ENCODE measurements at regions of chr7 and their contacts with region 1.

Region 1: DNA sequence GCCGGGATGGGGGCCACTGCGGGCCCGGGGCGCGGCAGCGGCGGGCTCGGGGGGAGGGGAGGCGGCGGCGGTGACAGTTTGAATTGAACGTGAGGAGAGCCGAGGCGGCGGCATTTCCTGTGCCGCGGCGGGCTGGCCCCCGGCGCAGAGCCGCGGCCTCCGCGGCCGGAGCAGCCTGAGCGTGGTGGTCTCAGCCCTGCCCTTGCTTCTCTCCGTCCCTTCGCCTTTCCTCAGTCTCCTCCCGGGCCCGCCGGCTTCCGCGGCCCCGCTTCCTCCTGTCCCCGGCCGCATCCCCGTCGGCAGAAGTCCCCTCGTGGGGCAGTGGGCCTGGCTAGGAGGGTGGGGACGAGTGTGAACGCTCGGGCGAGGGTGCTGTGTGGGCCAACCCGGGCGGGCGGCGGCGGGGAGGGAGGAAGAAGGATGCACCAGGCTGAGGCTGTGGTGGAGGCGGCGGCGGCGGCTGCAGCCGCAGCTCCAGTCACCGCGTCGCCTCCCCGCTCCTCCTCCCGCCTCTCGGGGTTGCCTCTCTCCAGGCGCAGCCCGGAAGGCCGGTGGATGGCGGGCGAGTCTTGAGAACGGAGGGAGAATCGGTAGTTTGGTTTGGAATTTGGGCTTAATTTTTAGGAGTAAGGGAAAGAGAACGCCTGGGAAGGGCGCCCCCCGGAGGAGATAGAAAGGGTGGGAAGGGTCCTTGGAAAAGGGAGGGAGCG is 690 bp downstream of the SEPTIN7 start:
- DNase-seq: peak; percentile 63 to 90 (median 79)
- ATAC-seq: peak; percentile 27
- H3K4me3 ChIP-seq: peak overlapping the region; percentile 58 to 84
- H3K4me3 Mint-ChIP-seq: peak overlapping the region; percentile 91
- H3K27ac ChIP-seq: peak overlapping the region; percentile 98
- H3K27ac Mint-ChIP-seq: peak overlapping the region; percentile 98
- H3K4me1 ChIP-seq: peaks cover 49% of the 10 kb centered on the region
- H3K4me1 Mint-ChIP-seq: peaks cover 48% of the 10 kb centered on the region
- H3K27me3 ChIP-seq: no peaks in the 10 kb centered on the region
- H3K27me3 Mint-ChIP-seq: no peaks in the 10 kb centered on the region
- CTCF ChIP-seq: peak; percentile 26

Region 2: GRCh38 chr7:35694781-35695472 is 106.6 kb before region 1 on chr7 and contains the start of gene HERPUD2:
- CTCF ChIA-PET with region 1: interaction called, 9 read pairs
- POLR2A ChIA-PET with region 1: interaction called, 80 read pairs
- intact Hi-C with region 1: loop called (anchors 1 kb)
- DNase-seq: peak; percentile 85 to 96 (median 93)
- ATAC-seq: peak; percentile 80
- H3K4me3 ChIP-seq: peak within 1 kb of the TSS; percentile 93 to 100
- H3K4me3 Mint-ChIP-seq: peak within 1 kb of the TSS; percentile 87
- H3K27ac ChIP-seq: peak within 1 kb of the TSS; percentile 97 to 100
- H3K27ac Mint-ChIP-seq: peak within 1 kb of the TSS; percentile 100
- H3K4me1 ChIP-seq: peaks cover 33% of the 10 kb centered on the region
- H3K4me1 Mint-ChIP-seq: peaks cover 59% of the 10 kb centered on the region
- H3K27me3 ChIP-seq: no peaks in the 10 kb centered on the region
- H3K27me3 Mint-ChIP-seq: no peaks in the 10 kb centered on the region
- CTCF ChIP-seq: no peak
- total RNA-seq, gene HERPUD2: 123 to 134 TPM

Region 3: GRCh38 chr7:35714862-35715261 is 86.7 kb before region 1 on chr7:
- CTCF ChIA-PET with region 1: interaction called, 8 read pairs
- POLR2A ChIA-PET with region 1: interaction called, 21 read pairs
- intact Hi-C with region 1: no loop called
- DNase-seq: peak in 1 of 9 experiments; percentile 35
- ATAC-seq: no peak
- H3K4me3 ChIP-seq: no peak overlapping the region
- H3K4me3 Mint-ChIP-seq: no peak overlapping the region
- H3K27ac ChIP-seq: no peak overlapping the region
- H3K27ac Mint-ChIP-seq: peak overlapping the region; percentile 2
- H3K4me1 ChIP-seq: peaks cover 8% of the 10 kb centered on the region
- H3K4me1 Mint-ChIP-seq: peaks cover 8% of the 10 kb centered on the region
- H3K27me3 ChIP-seq: no peaks in the 10 kb centered on the region
- H3K27me3 Mint-ChIP-seq: no peaks in the 10 kb centered on the region
- CTCF ChIP-seq: no peak

Region 4: GRCh38 chr7:35839860-35840854 is 38.6 kb after region 1 on chr7:
- CTCF ChIA-PET with region 1: no interaction called
- POLR2A ChIA-PET with region 1: interaction called, 3 read pairs
- intact Hi-C with region 1: loop called (anchors 5 kb)
- DNase-seq: no peak
- ATAC-seq: no peak
- H3K4me3 ChIP-seq: no peak overlapping the region
- H3K4me3 Mint-ChIP-seq: no peak overlapping the region
- H3K27ac ChIP-seq: no peak overlapping the region
- H3K27ac Mint-ChIP-seq: no peak overlapping the region
- H3K4me1 ChIP-seq: no peaks in the 10 kb centered on the region
- H3K4me1 Mint-ChIP-seq: peaks cover 58% of the 10 kb centered on the region
- H3K27me3 ChIP-seq: no peaks in the 10 kb centered on the region
- H3K27me3 Mint-ChIP-seq: no peaks in the 10 kb centered on the region
- CTCF ChIP-seq: no peak

Region 5: DNA sequence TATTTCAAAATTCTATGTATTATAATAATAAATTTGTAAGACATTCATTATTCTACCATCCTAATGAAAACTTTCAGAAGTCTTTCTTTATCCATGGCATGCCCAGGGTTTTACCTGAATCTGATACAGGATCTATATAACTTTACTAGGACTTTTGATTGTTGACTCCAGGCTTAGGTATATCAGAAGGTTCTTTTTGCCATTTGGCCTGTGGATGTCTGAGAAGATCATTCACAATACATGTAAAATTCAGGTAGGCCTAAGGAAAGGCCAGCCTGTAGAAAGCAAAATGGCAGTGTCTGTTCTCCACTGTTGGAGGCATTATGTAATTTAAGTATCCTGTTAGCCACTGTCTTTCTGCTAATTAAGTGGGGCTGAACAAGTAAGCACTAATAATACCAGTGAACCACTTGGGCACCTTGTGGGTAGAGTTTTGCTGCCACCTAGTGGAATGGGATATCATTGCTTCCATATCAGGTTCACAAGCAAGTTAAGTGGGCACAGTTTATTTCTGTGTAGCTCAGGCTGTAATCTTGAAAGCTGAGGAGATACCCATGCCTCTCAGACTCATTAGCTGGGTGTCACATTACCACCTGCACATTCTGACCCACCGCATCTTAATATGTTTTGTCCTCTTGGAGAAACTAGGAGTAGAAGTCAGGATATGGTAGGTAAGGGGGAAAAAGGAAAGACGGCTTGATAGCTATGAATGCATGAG is 104.8 kb after region 1 on chr7:
- CTCF ChIA-PET with region 1: interaction called, 3 read pairs
- POLR2A ChIA-PET with region 1: no interaction called
- intact Hi-C with region 1: loop called in 1 of 2 experiments (anchors 5 kb)
- DNase-seq: peak; percentile 44 to 86 (median 69)
- ATAC-seq: peak; percentile 94
- H3K4me3 ChIP-seq: no peak overlapping the region
- H3K4me3 Mint-ChIP-seq: no peak overlapping the region
- H3K27ac ChIP-seq: no peak overlapping the region
- H3K27ac Mint-ChIP-seq: no peak overlapping the region
- H3K4me1 ChIP-seq: no peaks in the 10 kb centered on the region
- H3K4me1 Mint-ChIP-seq: peaks cover 19% of the 10 kb centered on the region
- H3K27me3 ChIP-seq: no peaks in the 10 kb centered on the region
- H3K27me3 Mint-ChIP-seq: no peaks in the 10 kb centered on the region
- CTCF ChIP-seq: peak; percentile 95

Measured in CD8-positive, alpha-beta T cell (primary cell).